Activated CD4-positive, alpha-beta T cell treated with anti-CD3 and anti-CD28 coated beads, Interleukin-2, amount 10 ng/mL, durations not matched to agents 24 days and 14 days (primary cell): ENCODE measurements at regions of chr3 and their contacts with region 1.

Region 1: GRCh38 chr3:13495921-13496723 is 16.0 kb downstream of the HDAC11 start:
- DNase-seq: peak; percentile 91
- H3K4me3 Mint-ChIP-seq: no peak overlapping the region
- H3K27ac Mint-ChIP-seq: no peak overlapping the region
- H3K4me1 Mint-ChIP-seq: peaks cover 2% of the 10 kb centered on the region
- H3K27me3 Mint-ChIP-seq: peaks cover 1% of the 10 kb centered on the region

Region 2: DNA sequence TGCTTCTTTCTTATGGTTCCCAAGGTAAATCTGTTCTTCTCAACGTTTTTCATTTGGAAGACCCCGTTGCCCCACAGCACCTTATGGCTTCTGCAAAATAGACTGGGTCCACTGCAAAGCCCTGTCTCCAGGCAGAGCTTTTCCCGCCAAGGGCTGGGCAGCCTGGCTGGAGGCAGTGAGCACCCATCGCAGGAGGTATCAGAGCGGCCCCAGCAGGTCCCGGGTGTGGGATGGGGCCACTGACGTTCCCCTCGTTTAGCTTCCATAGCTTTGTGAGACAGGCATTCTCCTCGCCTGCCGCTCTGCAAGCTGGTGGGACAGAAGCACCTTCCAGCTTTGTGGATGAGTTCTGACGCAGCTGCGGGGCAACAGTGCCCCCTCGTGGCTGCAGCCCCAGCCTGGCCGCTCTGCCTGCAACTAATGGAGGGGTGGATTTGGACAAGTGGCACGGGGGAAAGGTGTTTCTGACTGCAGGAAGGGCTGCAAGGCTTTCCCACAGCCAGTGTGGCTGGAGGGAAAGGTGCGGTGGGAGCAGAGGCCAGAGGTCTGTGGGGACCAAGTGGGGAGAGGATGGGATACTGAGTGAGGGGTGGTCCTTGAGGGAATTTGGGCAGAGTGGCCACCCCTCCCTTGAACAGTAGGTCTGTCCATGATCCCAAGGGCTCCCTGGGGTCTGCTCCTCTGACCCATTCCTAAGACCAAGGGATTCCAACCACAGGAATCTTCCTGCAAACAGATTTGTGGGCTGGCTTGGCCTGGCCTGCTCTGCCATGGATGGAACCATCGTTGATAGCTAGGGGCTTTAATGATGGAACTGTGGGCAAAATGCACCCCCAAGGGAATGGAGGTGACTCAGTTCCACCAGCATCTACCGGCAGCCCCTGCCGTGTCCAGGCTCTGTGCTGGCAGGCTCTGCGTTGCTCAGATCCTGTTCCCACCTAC is 152.2 kb after region 1 on chr3:
- intact Hi-C with region 1: loop called (anchors 1 kb)
- DNase-seq: peak; percentile 93
- H3K4me3 Mint-ChIP-seq: no peak overlapping the region
- H3K27ac Mint-ChIP-seq: no peak overlapping the region
- H3K4me1 Mint-ChIP-seq: peaks cover 14% of the 10 kb centered on the region
- H3K27me3 Mint-ChIP-seq: peaks cover 46% of the 10 kb centered on the region

Region 3: GRCh38 chr3:13884851-13885703 is 389.0 kb after region 1 on chr3:
- intact Hi-C with region 1: loop called (anchors 5 kb)
- DNase-seq: peak; percentile 92
- H3K4me3 Mint-ChIP-seq: no peak overlapping the region
- H3K27ac Mint-ChIP-seq: no peak overlapping the region
- H3K4me1 Mint-ChIP-seq: peaks cover 5% of the 10 kb centered on the region
- H3K27me3 Mint-ChIP-seq: peaks cover 45% of the 10 kb centered on the region